Caco-2 (cell line): ENCODE measurements at regions of chr11 and their contacts with region 1.

Region 1: DNA sequence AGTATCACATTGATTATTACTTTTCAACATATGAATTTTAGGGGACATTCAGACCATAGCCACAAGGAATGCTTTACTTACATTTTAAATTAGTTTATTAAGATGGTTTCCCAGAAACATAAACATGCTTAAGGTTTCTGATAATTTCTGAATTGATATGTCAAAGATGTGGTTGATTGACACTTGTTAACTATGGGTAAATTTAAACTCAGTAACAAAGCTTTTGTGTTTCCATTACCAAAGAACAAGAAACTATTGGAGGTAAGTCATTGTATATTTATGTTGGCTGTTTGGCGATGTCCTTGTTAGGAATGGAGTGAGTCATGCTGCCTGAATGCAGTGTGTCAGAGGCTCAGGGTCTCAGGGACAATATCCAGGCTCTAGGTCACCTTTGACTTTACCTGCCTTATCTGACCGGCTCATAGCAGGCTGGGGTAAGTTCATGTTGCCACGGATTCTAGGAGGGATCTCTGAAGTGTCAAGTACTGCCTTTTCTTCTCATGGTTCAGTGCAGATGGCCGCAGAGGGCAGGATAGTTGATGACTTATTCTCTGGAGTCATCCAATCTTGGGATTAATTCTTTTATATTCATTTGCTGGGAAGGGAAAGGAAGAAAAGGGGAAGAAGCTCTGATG is 53.1 kb downstream of the SPON1 start:
- DNase-seq: peak; percentile 79 to 88
- H3K4me3 ChIP-seq: no peak overlapping the region
- H3K4me3 Mint-ChIP-seq: peak overlapping the region; percentile 54
- H3K27ac Mint-ChIP-seq: peak overlapping the region; percentile 80
- H3K4me1 ChIP-seq: peaks cover 47% of the 10 kb centered on the region
- H3K4me1 Mint-ChIP-seq: peaks cover 35% of the 10 kb centered on the region
- H3K27me3 ChIP-seq: no peaks in the 10 kb centered on the region
- H3K27me3 Mint-ChIP-seq: no peaks in the 10 kb centered on the region
- CTCF ChIP-seq: no peak

Region 2: DNA sequence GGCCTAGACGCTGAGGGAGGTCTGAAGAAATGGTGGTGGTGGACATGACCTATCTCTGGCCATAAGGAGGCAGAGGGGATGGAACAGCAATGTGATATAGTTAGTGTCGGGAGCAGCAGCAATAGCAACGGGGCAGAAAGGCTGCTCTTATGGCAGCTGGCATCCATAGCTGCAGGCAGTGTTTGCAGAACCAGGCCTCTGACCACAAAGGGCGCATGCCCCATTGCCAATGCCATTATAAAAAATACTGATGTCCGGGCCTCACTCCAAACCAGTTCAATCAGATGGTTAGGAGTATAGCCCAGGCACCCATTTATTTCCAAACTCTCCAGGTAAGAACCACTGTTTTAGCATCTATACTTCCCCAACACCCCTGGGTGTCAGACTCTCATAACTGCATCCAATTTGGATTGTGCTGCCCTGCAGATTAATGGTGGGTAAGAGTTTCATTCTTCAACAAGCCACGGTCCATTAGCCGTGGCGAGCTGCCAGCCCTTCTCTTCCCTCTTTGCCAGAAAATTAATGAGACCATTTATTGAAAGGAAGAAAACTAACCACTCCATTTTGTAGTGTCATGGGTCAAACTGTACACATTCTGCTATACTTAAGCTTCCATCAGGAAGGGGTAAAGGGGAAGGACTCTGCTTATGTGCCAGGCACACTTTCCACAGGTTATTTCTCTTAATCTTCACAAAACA is 125.9 kb before region 1 on chr11:
- CTCF ChIA-PET with region 1: no interaction called
- POLR2A ChIA-PET with region 1: no interaction called
- intact Hi-C with region 1: no loop called
- DNase-seq: no peak
- H3K4me3 ChIP-seq: no peak overlapping the region
- H3K4me3 Mint-ChIP-seq: no peak overlapping the region
- H3K27ac Mint-ChIP-seq: no peak overlapping the region
- H3K4me1 ChIP-seq: peaks cover 11% of the 10 kb centered on the region
- H3K4me1 Mint-ChIP-seq: peaks cover 11% of the 10 kb centered on the region
- H3K27me3 ChIP-seq: no peaks in the 10 kb centered on the region
- H3K27me3 Mint-ChIP-seq: peaks cover 4% of the 10 kb centered on the region
- CTCF ChIP-seq: no peak

Region 3: GRCh38 chr11:13962562-13963168 is 52.9 kb before region 1 on chr11 and contains the start of gene SPON1:
- CTCF ChIA-PET with region 1: no interaction called
- POLR2A ChIA-PET with region 1: no interaction called
- intact Hi-C with region 1: loop called (anchors 1 kb)
- DNase-seq: peak; percentile 70 to 76
- H3K4me3 ChIP-seq: peak within 1 kb of the TSS; percentile 94
- H3K4me3 Mint-ChIP-seq: peak within 1 kb of the TSS; percentile 75
- H3K27ac Mint-ChIP-seq: peak within 1 kb of the TSS; percentile 76
- H3K4me1 ChIP-seq: peaks cover 35% of the 10 kb centered on the region
- H3K4me1 Mint-ChIP-seq: peaks cover 22% of the 10 kb centered on the region
- H3K27me3 ChIP-seq: no peaks in the 10 kb centered on the region
- H3K27me3 Mint-ChIP-seq: peaks cover 5% of the 10 kb centered on the region
- CTCF ChIP-seq: no peak
- total RNA-seq, gene SPON1: 41.4 and 46.9 TPM in 2 replicates

Region 4: GRCh38 chr11:13970986-13971385 is 44.6 kb before region 1 on chr11:
- CTCF ChIA-PET with region 1: interaction called, 3 read pairs
- POLR2A ChIA-PET with region 1: no interaction called
- intact Hi-C with region 1: loop called (anchors 1 kb)
- DNase-seq: peak; percentile 73 to 75
- H3K4me3 ChIP-seq: no peak overlapping the region
- H3K4me3 Mint-ChIP-seq: no peak overlapping the region
- H3K27ac Mint-ChIP-seq: peak overlapping the region; percentile 63
- H3K4me1 ChIP-seq: peaks cover 61% of the 10 kb centered on the region
- H3K4me1 Mint-ChIP-seq: peaks cover 53% of the 10 kb centered on the region
- H3K27me3 ChIP-seq: no peaks in the 10 kb centered on the region
- H3K27me3 Mint-ChIP-seq: no peaks in the 10 kb centered on the region
- CTCF ChIP-seq: peak; percentile 36 to 70

Region 5: GRCh38 chr11:13993096-13993765 is 22.4 kb before region 1 on chr11:
- CTCF ChIA-PET with region 1: no interaction called
- POLR2A ChIA-PET with region 1: no interaction called
- intact Hi-C with region 1: loop called (anchors 1 kb)
- DNase-seq: peak; percentile 45 to 71
- H3K4me3 ChIP-seq: no peak overlapping the region
- H3K4me3 Mint-ChIP-seq: peak overlapping the region; percentile 62
- H3K27ac Mint-ChIP-seq: peak overlapping the region; percentile 79
- H3K4me1 ChIP-seq: peaks cover 46% of the 10 kb centered on the region
- H3K4me1 Mint-ChIP-seq: peaks cover 29% of the 10 kb centered on the region
- H3K27me3 ChIP-seq: no peaks in the 10 kb centered on the region
- H3K27me3 Mint-ChIP-seq: no peaks in the 10 kb centered on the region
- CTCF ChIP-seq: no peak

Region 6: GRCh38 chr11:14041040-14041439 is 25.4 kb after region 1 on chr11:
- CTCF ChIA-PET with region 1: no interaction called
- POLR2A ChIA-PET with region 1: no interaction called
- intact Hi-C with region 1: loop called (anchors 1 kb)
- DNase-seq: peak in 1 of 2 experiments; percentile 34
- H3K4me3 ChIP-seq: no peak overlapping the region
- H3K4me3 Mint-ChIP-seq: no peak overlapping the region
- H3K27ac Mint-ChIP-seq: no peak overlapping the region
- H3K4me1 ChIP-seq: peaks cover 15% of the 10 kb centered on the region
- H3K4me1 Mint-ChIP-seq: no peaks in the 10 kb centered on the region
- H3K27me3 ChIP-seq: no peaks in the 10 kb centered on the region
- H3K27me3 Mint-ChIP-seq: no peaks in the 10 kb centered on the region
- CTCF ChIP-seq: peak; percentile 43 to 67